ENCODE measurements at regions of chr17 and their contacts with region 1.

Region 1: GRCh38 chr17:48259694-48260291 is 152.2 kb downstream of the SNX11 start:
- DNase-seq: no peak
- ATAC-seq: no peak
- H3K4me3 Mint-ChIP-seq: no peak overlapping the region
- H3K27ac Mint-ChIP-seq: no peak overlapping the region
- H3K4me1 Mint-ChIP-seq: peaks cover 5% of the 10 kb centered on the region
- H3K27me3 Mint-ChIP-seq: no peaks in the 10 kb centered on the region

Region 2: DNA sequence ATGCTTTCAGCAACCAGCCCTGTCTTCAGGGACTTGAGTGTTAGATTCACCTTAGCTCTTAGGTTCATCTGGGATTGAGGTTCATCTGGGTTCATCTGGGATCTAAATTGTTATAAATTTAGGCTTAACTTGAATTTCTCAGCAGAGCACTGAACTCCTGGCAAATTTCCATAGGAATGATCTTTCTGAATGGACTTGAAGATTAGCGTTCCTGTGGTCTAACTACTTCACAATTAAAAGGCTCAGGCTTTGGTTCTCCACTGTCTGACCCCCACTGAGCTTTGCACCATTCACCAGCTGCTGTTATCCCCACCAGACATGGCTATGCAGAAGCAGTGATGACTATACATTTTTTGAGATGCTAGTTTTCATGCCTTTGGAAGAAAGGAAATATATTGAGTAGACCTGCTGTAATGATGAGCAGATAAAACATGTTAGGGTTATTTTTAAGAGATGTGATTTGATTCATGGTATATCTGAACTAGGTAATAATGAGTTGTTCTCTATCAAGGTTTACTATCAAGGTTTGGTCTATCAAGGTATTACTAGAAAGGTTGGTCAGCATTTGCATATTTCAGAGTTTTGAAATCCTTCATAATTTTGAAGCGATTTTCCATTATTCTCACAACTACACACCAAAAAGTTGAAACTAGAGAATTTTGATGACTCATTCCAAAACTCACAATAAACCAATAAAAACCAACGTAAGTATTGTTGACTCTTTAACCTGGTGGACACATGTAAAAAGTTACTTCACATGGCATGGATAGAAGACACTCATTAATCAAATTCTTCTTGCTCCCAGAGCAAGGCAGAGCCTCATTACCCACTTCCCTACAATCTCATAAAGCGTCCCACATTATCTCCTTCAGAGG is 80.5 kb before region 1 on chr17:
- CTCF ChIA-PET with region 1: no interaction called
- DNase-seq: no peak
- ATAC-seq: no peak
- H3K4me3 Mint-ChIP-seq: no peak overlapping the region
- H3K27ac Mint-ChIP-seq: no peak overlapping the region
- H3K4me1 Mint-ChIP-seq: peaks cover 24% of the 10 kb centered on the region
- H3K27me3 Mint-ChIP-seq: no peaks in the 10 kb centered on the region

Region 3: GRCh38 chr17:48247038-48247437 is 12.8 kb before region 1 on chr17:
- CTCF ChIA-PET with region 1: interaction called, 14 read pairs
- DNase-seq: no peak
- ATAC-seq: no peak
- H3K4me3 Mint-ChIP-seq: no peak overlapping the region
- H3K27ac Mint-ChIP-seq: no peak overlapping the region
- H3K4me1 Mint-ChIP-seq: peaks cover 21% of the 10 kb centered on the region
- H3K27me3 Mint-ChIP-seq: no peaks in the 10 kb centered on the region

Region 4: GRCh38 chr17:48270896-48271295 is 11.1 kb after region 1 on chr17:
- CTCF ChIA-PET with region 1: interaction called, 10 read pairs
- DNase-seq: no peak
- ATAC-seq: no peak
- H3K4me3 Mint-ChIP-seq: no peak overlapping the region
- H3K27ac Mint-ChIP-seq: no peak overlapping the region
- H3K4me1 Mint-ChIP-seq: peaks cover 8% of the 10 kb centered on the region
- H3K27me3 Mint-ChIP-seq: no peaks in the 10 kb centered on the region

Region 5: DNA sequence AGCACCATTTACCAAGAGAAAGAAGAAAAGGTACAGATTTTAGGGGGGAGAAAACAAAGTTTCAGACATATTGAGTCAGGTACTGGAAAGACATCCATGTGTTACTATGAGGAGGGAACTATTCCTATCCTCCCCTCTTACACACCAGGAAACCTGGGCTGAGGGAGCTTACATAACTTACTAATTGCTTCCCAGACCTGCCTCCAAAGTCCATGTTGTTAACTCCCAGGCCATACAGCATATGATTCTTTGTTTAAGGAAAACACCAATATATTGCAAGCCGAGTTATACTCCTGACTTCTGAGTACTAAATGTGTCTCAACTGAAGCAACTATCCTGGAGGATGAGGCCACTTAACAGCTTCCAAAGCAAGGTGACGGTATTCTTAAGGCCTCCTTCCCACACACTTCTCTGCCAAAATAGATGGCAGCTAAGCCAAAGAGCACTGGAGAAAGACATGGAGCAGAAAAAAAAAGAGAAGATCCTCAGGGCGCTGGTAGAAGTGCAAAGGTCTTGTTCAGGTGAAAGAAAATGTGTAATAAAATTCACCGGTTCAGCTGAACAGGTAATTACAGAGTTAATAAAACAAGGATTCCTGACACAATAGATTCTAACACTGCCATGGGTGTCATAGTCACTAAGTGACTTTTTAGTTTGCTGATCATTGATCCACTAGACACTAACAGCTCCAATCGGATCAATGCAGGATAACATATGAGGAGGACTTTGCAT is 19.1 kb after region 1 on chr17:
- CTCF ChIA-PET with region 1: interaction called, 15 read pairs
- DNase-seq: no peak
- ATAC-seq: no peak
- H3K4me3 Mint-ChIP-seq: no peak overlapping the region
- H3K27ac Mint-ChIP-seq: no peak overlapping the region
- H3K4me1 Mint-ChIP-seq: peaks cover 8% of the 10 kb centered on the region
- H3K27me3 Mint-ChIP-seq: no peaks in the 10 kb centered on the region

Region 6: DNA sequence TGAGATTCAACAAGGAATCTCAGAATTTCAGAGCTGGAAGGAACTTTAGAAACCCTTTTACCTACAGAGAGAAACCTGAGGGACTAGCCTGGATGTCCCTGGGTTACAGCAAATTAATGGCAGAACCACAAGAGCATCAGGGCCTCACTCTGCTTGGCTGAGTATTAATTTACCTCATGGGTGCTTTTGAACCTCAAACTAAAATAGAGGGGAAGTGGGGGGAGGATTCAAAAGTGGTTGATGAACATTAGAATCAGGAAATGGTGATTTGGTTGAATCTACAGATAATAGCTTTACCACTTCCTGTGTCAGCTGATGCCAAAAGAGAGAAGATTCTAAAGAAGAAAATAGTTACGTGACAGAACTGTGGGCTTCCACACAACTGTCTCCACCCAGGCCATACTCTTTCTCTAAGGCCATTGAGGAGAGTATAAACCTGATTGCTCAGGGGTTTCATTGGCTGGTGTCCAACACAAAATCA is 181.5 kb after region 1 on chr17:
- CTCF ChIA-PET with region 1: no interaction called
- DNase-seq: peak; percentile 72
- ATAC-seq: peak; percentile 71
- H3K4me3 Mint-ChIP-seq: peak overlapping the region; percentile 52
- H3K27ac Mint-ChIP-seq: peak overlapping the region; percentile 98
- H3K4me1 Mint-ChIP-seq: peaks cover 90% of the 10 kb centered on the region
- H3K27me3 Mint-ChIP-seq: no peaks in the 10 kb centered on the region

Region 7: DNA sequence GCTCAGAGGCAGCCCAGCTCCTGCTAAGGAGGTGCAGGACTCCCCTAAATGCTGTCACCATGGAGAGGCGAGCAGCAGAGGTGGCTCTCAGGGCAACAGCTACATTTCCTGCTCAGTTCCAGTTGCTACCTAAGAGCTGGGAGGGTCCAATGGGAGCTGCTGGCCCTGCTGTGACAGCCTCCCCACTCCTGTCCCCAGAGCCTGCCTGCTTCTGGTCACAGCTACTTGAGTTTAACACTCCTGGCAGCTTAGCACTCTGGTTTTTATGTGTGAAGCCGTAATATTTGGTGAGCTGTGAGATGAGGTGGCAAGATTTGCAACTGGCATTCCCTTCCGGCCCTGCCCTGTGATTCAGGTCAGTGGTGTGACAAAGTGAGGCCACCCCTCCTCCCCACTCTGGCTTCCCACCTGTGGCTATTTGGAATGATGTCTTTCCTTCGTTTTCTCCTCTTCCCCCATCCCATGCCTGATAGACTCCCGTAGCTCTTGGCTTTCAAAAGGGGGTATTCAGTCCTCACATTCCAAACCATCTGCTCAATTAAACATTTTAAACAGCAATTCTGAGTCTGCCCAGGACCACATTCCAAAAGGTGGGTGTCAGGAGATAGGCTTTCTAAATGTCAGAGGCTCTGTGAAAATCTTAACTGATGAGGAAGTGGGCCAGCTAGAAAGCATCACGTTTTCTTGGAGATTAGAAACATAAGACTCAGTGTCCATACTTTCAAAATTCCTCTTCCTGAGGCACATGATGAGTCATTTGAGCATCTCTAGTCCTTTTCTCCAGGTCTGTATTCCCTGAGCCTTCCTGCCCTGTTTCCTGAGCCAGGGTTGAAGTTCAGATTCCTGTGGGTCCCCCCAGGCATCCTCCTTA is 212.9 kb after region 1 on chr17:
- CTCF ChIA-PET with region 1: no interaction called
- DNase-seq: peak; percentile 58
- ATAC-seq: peak; percentile 86
- H3K4me3 Mint-ChIP-seq: no peak overlapping the region
- H3K27ac Mint-ChIP-seq: peak overlapping the region; percentile 63
- H3K4me1 Mint-ChIP-seq: peaks cover 16% of the 10 kb centered on the region
- H3K27me3 Mint-ChIP-seq: peaks cover 13% of the 10 kb centered on the region